ENCODE measurements at regions of chr6 and their contacts with region 1.

Region 1: DNA sequence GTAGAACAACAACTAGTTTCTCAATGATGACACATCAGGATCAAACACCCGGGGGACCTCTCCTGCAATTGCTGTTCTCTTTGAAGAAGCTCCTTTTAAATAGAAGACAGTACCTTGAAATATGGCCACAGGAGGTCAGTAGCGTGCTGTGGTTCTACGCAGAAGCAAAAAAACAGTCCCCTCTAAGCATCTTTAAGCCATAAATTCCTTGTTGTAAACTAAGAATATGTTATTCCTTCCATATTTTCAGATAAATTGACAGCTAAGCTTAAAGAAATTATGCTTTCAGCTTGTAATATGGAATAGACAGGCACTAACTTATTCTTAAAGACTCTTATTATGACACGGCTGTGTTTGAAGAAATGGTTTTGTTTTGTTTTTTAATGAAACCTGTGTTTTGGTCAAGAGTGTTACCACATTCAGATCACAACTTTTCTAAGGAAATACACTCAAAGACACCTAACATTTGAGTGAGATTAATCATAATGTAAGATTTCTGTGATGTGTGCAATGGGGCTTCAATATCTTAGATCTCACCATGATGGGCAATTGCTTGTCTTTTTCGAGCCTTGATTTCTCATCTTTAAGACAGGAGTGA is 49.7 kb upstream of the IL20RA start:
- DNase-seq: peak; percentile 66
- H3K4me3 Mint-ChIP-seq: no peak overlapping the region
- H3K27ac Mint-ChIP-seq: no peak overlapping the region
- H3K4me1 Mint-ChIP-seq: peaks cover 31% of the 10 kb centered on the region
- H3K27me3 Mint-ChIP-seq: no peaks in the 10 kb centered on the region

Region 2: GRCh38 chr6:136901212-136901784 is 193.2 kb before region 1 on chr6:
- CTCF ChIA-PET with region 1: no interaction called
- POLR2A ChIA-PET with region 1: no interaction called
- DNase-seq: no peak
- H3K4me3 Mint-ChIP-seq: no peak overlapping the region
- H3K27ac Mint-ChIP-seq: no peak overlapping the region
- H3K4me1 Mint-ChIP-seq: peaks cover 5% of the 10 kb centered on the region
- H3K27me3 Mint-ChIP-seq: no peaks in the 10 kb centered on the region

Region 3: DNA sequence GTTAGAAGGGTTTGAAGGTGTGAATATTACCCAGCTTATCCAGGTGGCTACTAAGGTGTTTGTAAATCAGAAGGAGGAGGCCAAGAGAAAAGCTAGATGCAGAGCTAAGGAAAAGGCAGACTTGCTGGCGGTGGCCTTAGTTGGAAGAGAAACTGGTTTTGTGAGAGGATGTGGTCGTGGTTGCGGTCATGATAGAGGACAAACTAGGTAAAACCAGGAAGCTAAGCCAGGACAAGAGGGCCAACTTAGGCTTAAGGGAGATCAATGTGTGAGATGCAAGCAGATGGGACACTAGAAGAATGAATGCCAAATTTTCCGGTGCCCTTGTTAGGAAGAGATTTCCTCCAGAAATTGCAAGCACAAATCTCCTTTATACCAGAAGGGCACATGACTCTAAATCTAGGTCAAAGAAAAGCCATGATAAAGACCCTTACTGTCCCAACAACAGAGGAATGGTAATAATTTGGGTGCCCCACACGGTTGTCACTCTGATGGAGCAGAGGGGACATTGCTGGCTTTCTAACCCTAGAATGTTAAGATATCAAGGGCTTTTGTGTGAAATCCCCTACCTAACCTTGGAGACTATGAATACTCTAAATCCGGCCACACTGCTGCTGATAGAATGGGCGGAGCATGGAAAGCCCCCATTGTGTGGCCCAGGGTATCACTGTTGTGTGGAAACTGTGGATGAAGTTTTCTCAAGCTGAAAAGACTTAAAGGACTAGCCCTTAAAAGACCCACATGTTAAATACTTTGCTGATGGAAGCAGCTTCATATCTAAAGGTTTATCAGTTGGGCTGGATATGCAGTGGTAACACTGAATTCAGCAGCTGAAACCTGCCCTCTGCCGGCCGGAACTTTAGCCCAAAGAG is 71.1 kb after region 1 on chr6:
- CTCF ChIA-PET with region 1: interaction called, 17 read pairs
- POLR2A ChIA-PET with region 1: interaction called, 9 read pairs
- DNase-seq: peak; percentile 76
- H3K4me3 Mint-ChIP-seq: peak overlapping the region; percentile 23
- H3K27ac Mint-ChIP-seq: peak overlapping the region; percentile 70
- H3K4me1 Mint-ChIP-seq: peaks cover 30% of the 10 kb centered on the region
- H3K27me3 Mint-ChIP-seq: peaks cover 20% of the 10 kb centered on the region

Region 4: GRCh38 chr6:137313928-137314855 is 219.7 kb after region 1 on chr6:
- CTCF ChIA-PET with region 1: interaction called, 45 read pairs
- POLR2A ChIA-PET with region 1: no interaction called
- DNase-seq: peak; percentile 72
- H3K4me3 Mint-ChIP-seq: no peak overlapping the region
- H3K27ac Mint-ChIP-seq: no peak overlapping the region
- H3K4me1 Mint-ChIP-seq: peaks cover 4% of the 10 kb centered on the region
- H3K27me3 Mint-ChIP-seq: peaks cover 6% of the 10 kb centered on the region

Measured in activated CD4-positive, alpha-beta memory T cell treated with anti-CD3 and anti-CD28 coated beads, Interleukin-2, amount 10 ng/mL, durations not matched to agents 7 days and 5 days (primary cell).